ENCODE measurements at regions of chr12 and their contacts with region 1.

Region 1: DNA sequence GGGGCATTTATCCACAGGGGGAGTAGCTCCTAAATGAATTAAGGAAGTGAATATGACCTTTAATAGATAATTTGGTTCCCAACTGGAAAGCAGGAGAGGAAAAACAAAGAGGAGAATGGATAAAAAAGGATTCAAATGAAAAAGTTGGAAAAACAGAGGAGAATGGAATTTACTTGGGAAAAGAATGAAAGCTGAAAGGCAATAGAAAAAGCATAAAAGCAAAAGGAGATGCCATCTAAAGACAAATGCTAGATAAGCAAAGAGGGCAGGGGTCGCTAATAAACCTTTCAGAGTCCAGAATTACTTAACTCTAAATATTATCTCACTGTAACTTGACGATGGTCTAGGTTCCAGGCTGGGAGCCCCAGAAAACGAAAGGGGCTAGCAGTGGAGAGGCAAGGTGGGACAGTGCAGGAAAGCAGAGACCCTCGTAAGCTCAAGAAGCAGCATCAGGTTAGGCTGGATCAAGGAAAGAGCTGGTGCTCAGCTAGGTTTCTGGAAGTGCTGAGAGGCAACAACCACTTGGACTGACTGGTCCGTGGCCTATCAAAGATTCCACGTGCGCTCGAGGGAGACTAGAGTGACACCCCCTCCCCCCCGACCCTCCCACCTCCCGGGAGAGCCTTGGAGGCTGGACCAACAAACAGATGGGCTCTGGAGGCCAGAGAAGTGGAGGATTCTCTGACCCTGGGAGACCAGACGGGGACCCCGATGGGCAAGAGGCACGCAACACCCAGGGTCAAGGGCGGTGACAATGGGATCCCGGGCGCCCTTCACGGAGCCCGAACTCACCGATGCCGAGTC is 1.2 kb downstream of the SLC2A13 start:
- DNase-seq: peak; percentile 9

Region 2: GRCh38 chr12:40010899-40011774 is 93.5 kb before region 1 on chr12:
- in situ Hi-C with region 1: loop called (anchors 5 kb)
- DNase-seq: peak; percentile 53